Posterior vena cava (tissue), 2 donors: ENCODE measurements at regions of chr20 and their contacts with region 1.

Region 1: GRCh38 chr20:62065669-62066338 is at the start of gene TAF4:
- DNase-seq: peak; percentile 92
- total RNA-seq, gene TAF4: 8.8 to 11.4 TPM

Region 2: DNA sequence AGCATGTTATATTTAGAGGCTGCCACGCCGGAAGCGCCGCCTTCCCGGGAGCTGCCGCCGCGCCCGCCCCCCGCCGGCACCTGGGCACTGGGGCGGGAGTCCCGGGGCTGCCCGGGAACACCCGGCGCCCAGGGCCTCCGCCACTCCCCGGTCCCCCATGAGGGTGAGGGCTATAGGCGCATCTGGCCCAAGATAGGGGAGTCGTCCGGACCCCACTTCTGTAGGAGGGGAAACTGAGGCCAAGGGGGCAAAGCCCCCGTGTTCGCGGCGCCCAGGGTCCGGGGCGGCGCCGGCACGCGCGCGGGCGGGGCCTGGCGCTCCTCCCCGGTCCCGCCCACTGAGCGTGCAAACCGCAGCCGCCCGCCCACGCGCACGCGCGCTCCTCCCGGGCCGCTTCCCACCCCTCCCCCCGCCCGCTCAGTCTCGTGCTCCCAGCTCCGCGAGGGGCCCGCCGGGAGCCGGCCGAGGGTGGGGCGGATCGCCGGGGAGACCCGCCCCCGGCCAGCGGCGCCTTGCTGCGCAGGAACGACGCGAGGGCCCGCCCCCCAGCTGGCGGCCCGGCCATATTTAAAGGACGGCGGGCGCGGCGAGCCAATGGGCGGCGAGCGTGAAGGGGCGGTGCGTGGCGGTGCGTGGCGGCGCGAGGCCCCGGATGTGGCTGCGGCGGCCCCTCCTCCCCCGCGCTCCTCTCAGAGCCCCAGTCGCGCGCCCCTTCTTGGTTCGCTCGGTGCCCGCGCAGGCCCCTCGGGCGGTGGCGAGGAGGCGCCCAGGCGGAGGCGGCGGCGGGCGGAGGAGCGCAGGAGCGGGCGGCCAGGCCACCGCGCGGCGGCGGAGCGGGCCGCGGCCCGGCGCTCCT is 56.2 kb after region 1 on chr20 and contains the start of gene LSM14B:
- intact Hi-C with region 1: loop called (anchors 5 kb)
- DNase-seq: peak; percentile 99
- total RNA-seq, gene LSM14B: 24.4 to 26.3 TPM

Region 3: GRCh38 chr20:62143118-62143973 is 77.5 kb after region 1 on chr20 and contains the starts of genes PSMA7 and SS18L1:
- intact Hi-C with region 1: loop called in 1 of 2 experiments (anchors 2 kb)
- DNase-seq: peak; percentile 96
- total RNA-seq, gene PSMA7: 179 to 194 TPM
- total RNA-seq, gene SS18L1: 9.7 to 10.3 TPM

Region 4: GRCh38 chr20:62606551-62607201 is 540.9 kb after region 1 on chr20:
- intact Hi-C with region 1: no loop called
- DNase-seq: no peak